ENCODE measurements at regions of chr5 and their contacts with region 1.

Region 1: DNA sequence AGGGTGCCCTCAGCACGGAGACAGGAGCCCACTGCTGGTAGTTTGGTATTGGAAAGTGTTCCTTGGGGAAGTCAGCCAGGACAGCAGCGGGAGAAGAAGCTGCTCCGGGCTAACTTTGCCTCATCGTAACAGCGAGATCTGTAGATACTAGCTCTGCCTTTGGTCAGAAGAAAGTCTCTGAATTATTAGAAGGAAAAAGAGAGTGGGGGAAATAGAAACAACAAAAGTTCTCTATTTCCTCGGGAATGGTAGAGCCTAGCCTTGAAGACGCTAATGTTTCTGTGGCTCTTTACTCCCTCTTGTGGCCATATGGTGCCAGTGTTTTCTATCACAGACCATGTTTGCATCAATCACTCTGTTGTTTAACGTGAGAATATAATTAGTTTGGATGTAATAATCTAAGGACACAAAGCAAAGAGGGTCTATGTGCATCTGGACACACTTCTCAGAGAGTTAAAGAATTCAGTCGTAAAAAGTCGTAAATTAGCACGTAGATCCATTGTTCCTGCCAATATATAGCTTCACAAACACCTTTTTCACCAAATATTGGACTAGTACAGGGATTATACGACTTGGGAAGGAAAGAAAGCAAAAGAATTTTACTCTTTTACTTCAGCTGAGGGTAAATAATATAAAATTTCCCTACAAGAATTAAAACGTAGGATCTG is 40.2 kb upstream of the HSD17B4 start:
- DNase-seq: no peak
- H3K4me3 ChIP-seq: peak overlapping the region; percentile 38
- H3K27me3 ChIP-seq: 0 out of 2 replicates have a peak, but pooled peaks cover 1% of the 10 kb centered on the region
- CTCF ChIP-seq: peak; percentile 81

Region 2: GRCh38 chr5:118987988-118988865 is 423.8 kb before region 1 on chr5 and contains the start of gene DTWD2:
- CTCF ChIA-PET with region 1: interaction called, 74 read pairs
- POLR2A ChIA-PET with region 1: interaction called, 3 read pairs
- DNase-seq: no peak
- H3K4me3 ChIP-seq: peak within 1 kb of the TSS; percentile 55
- H3K27me3 ChIP-seq: no peaks in the 10 kb centered on the region
- CTCF ChIP-seq: peak; percentile 86
- polyA plus RNA-seq, gene DTWD2: 1.8 and 3.3 TPM in 2 replicates

Region 3: DNA sequence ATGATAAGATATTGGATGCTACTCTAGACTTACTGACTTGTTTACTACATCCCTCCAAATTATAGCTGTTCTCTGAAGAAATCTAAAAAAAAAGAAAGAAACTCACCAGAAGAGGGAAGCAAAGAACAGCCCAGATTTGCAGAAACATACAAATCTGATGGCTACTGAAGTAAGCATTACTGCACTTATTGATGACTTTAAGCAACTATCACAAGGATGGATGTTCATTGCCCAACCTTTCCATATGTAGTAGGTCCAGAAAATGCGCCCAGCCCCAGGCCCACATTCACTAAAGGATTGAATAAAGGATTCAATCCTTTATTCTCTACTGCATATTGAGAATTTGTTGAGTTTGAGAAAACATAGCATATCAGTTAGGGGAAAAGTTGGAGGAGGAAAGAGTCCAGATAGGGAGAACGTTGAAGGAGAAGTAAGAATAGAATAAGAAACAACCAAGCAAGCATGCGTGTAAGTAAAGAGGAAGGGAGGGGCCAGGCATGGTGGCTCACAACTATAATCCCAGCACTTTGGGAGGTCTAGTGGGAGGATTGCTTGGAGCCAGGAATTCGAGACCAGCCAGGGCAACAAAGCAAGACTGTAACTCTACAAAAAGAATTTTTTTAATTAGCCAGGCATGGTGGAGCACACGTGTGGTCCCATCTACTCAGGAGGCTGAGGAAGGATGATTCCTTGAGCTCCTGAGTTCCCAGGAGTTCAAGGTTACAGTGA is 389.9 kb before region 1 on chr5:
- CTCF ChIA-PET with region 1: interaction called, 77 read pairs
- POLR2A ChIA-PET with region 1: no interaction called
- DNase-seq: no peak
- H3K4me3 ChIP-seq: no peak overlapping the region
- H3K27me3 ChIP-seq: no peaks in the 10 kb centered on the region
- CTCF ChIP-seq: peak; percentile 58

Region 4: DNA sequence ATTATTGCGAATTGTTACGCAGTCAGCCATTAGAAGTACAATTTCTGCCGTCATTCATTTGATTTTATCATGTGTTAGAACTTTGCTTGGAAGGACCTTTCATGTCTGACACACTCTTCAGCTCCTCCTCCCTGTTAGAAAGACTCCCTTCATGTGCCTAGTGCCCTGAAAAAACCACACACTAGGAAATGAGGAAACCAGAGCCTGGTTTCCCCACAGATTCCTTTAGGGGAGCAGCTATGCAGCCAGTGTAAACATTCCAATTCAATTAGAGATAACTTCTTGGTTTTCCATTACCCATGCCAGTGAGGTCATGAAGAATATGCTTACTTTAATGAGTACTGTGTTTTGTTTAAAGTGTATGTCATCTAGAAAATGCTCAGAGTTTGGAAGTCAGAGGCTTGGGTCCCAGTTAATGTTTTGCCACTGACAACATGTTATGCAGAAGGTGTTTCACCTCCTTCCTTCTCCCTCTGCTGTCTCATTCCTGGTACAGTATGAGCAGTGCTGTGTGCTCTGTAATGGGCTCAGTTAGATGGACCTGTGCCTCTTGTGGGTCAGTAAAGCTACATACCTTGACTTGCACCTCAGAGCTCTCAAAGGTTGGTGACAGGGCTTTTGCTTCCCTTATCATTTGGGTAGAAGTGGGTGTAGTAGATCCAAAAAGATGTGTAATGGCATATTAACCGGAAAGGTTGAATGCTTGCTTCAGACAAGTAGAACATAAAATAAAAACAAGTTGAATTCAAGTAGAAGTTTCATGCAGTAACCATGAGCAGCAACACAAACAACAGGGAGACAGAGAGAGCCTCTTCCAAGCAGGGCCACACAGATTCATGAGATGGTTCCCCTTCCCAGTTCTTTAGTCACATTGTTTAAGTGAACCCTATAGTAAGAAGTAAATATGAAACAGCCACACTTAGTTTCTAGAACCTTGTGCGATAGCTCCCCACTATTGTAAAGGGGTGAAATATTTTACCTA is 108.9 kb before region 1 on chr5:
- CTCF ChIA-PET with region 1: interaction called, 12 read pairs
- POLR2A ChIA-PET with region 1: no interaction called
- DNase-seq: peak; percentile 95
- H3K4me3 ChIP-seq: no peak overlapping the region
- H3K27me3 ChIP-seq: no peaks in the 10 kb centered on the region
- CTCF ChIP-seq: peak; percentile 20; the same call in 1 of the 2 replicates

Region 5: DNA sequence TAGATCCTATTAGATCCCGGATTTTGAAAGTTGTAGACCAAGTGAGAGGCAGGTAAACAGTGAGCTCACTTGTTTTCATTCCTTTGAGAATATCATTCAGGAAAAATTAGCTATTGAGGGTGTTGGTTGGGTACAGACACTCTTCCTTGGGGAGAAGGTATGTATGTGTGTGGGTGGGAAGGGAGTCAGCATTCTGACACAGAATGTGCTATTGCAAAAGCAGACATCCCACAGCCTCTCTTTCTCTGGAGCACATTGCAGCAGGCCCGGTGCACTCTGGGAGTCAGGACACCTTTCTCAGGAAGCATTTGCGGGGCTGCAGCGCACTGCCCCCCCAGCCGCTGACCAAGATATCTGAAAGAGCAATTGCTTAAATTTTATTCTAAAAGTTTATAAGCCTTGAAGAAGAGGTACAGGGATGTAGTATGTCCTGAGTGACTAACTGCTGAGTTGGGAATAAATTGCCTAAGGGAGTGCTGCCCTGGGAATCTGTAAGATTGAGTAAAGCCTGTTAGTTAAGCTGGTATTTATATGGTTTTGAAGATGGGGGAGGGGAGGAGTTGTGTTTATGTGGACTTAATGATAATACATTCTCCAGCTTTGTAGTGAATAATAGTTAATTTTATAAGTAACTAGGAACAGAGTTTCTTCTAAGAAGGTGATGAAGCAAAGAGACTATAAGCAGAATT is 51.0 kb before region 1 on chr5:
- CTCF ChIA-PET with region 1: interaction called, 27 read pairs
- POLR2A ChIA-PET with region 1: no interaction called
- DNase-seq: no peak
- H3K4me3 ChIP-seq: no peak overlapping the region
- H3K27me3 ChIP-seq: no peaks in the 10 kb centered on the region
- CTCF ChIP-seq: no peak

Region 6: GRCh38 chr5:119400245-119400644 is 11.8 kb before region 1 on chr5:
- CTCF ChIA-PET with region 1: interaction called, 22 read pairs
- POLR2A ChIA-PET with region 1: no interaction called
- DNase-seq: no peak
- H3K4me3 ChIP-seq: no peak overlapping the region
- H3K27me3 ChIP-seq: no peaks in the 10 kb centered on the region
- CTCF ChIP-seq: no peak

Region 7: GRCh38 chr5:119501671-119502182 is 89.7 kb after region 1 on chr5:
- CTCF ChIA-PET with region 1: no interaction called
- POLR2A ChIA-PET with region 1: interaction called, 10 read pairs
- DNase-seq: no peak
- H3K4me3 ChIP-seq: no peak overlapping the region
- H3K27me3 ChIP-seq: no peaks in the 10 kb centered on the region
- CTCF ChIP-seq: no peak